Upper lobe of right lung (tissue), 1 donor: ENCODE measurements at regions of chr11 and their contacts with region 1.

Region 1: DNA sequence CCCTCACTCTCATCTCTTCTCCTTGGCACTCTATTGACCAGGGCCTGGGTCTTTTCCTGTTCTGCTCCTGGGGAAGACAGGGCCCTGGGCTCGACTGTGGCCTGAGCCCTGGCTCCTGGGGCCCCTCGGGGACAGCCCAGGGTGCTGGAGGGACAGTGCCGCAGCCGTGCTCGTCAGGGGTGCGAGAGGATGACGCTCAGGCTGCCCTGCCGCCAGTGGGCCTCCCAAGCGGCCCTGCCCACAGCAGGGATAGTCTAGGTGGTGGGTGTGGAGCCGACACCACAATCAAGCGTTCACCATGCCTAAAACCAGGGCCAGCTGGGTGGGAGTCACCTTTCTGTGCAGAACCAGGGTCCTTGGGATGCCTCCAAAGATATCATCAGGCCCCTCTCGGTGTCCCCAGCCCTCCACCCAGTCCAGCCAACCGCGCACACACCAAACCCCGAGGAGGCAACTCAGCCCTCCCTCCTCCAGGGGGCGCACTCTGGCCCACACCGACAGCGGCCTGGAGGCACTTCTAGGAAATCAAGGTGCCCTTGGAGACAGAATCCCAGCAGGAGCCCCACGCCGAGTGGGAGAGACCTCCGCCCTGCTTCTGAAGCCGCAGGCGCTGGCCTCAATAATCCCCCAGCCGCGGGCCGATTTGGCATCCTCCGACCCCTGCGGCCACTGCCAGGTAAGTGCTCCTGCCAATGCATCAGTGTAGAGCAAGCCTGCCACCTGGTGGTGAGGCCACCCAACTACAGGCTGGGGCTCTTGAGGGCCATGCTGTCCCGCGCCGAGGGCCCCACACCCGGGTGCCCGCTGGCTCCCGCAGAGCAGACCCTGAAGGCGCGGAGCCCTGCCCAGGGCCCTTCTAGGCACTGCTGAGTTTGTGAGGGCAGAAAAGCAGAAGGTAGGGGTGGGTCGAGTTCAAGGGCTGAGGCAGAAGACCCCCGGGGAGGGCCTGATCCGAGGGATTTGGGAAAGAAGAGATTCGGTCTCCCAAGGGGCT is 496.4 kb downstream of the BUD13 start:
- DNase-seq: peak; percentile 91
- ATAC-seq: peak; percentile 94
- H3K4me3 ChIP-seq: peak overlapping the region; percentile 25
- H3K27ac ChIP-seq: no peak overlapping the region
- H3K4me1 ChIP-seq: no peaks in the 10 kb centered on the region
- H3K27me3 ChIP-seq: no peaks in the 10 kb centered on the region
- CTCF ChIP-seq: peak; percentile 98

Region 2: GRCh38 chr11:115324581-115325432 is 951.5 kb before region 1 on chr11:
- intact Hi-C with region 1: loop called (anchors 10 kb)
- DNase-seq: no peak
- ATAC-seq: peak; percentile 91
- H3K4me3 ChIP-seq: no peak overlapping the region
- H3K27ac ChIP-seq: no peak overlapping the region
- H3K4me1 ChIP-seq: peaks cover 13% of the 10 kb centered on the region
- H3K27me3 ChIP-seq: no peaks in the 10 kb centered on the region
- CTCF ChIP-seq: peak; percentile 84

Region 3: GRCh38 chr11:116232364-116232828 is 44.0 kb before region 1 on chr11:
- intact Hi-C with region 1: no loop called
- DNase-seq: no peak
- ATAC-seq: no peak
- H3K4me3 ChIP-seq: no peak overlapping the region
- H3K27ac ChIP-seq: peak overlapping the region; percentile 24
- H3K4me1 ChIP-seq: peaks cover 14% of the 10 kb centered on the region
- H3K27me3 ChIP-seq: no peaks in the 10 kb centered on the region
- CTCF ChIP-seq: no peak